Thyroid gland (tissue), 4 donors: ENCODE measurements at regions of chr14 and their contacts with region 1.

Region 1: GRCh38 chr14:59688224-59689170 is 111.9 kb upstream of the CCDC175 start:
- DNase-seq: peak; percentile 54 to 61
- H3K4me3 ChIP-seq: no peak overlapping the region
- H3K27ac ChIP-seq: no peak overlapping the region
- H3K4me1 ChIP-seq: peaks cover 0 to 9% of the 10 kb centered on the region in 2 donors
- H3K27me3 ChIP-seq: no peaks in the 10 kb centered on the region
- CTCF ChIP-seq: peak; percentile 22 to 79 (median 64)
- POLR2A ChIP-seq: no peak

Region 2: GRCh38 chr14:59500732-59501131 is 187.8 kb before region 1 on chr14:
- intact Hi-C with region 1: no loop called
- DNase-seq: no peak
- H3K4me3 ChIP-seq: no peak overlapping the region
- H3K27ac ChIP-seq: no peak overlapping the region
- H3K4me1 ChIP-seq: no peaks in the 10 kb centered on the region
- H3K27me3 ChIP-seq: no peaks in the 10 kb centered on the region
- CTCF ChIP-seq: no peak
- POLR2A ChIP-seq: no peak

Region 3: GRCh38 chr14:59632381-59632780 is 56.1 kb before region 1 on chr14:
- intact Hi-C with region 1: loop called (anchors 5 kb)
- DNase-seq: peak; percentile 45 to 49
- H3K4me3 ChIP-seq: no peak overlapping the region
- H3K27ac ChIP-seq: no peak overlapping the region
- H3K4me1 ChIP-seq: peaks cover 0 to 5% of the 10 kb centered on the region in 2 donors
- H3K27me3 ChIP-seq: no peaks in the 10 kb centered on the region
- CTCF ChIP-seq: peak; percentile 31 to 77 (median 58)
- POLR2A ChIP-seq: no peak